Right ventricle myocardium inferior (tissue), 1 donor: ENCODE measurements at regions of chr4 and their contacts with region 1.

Region 1: DNA sequence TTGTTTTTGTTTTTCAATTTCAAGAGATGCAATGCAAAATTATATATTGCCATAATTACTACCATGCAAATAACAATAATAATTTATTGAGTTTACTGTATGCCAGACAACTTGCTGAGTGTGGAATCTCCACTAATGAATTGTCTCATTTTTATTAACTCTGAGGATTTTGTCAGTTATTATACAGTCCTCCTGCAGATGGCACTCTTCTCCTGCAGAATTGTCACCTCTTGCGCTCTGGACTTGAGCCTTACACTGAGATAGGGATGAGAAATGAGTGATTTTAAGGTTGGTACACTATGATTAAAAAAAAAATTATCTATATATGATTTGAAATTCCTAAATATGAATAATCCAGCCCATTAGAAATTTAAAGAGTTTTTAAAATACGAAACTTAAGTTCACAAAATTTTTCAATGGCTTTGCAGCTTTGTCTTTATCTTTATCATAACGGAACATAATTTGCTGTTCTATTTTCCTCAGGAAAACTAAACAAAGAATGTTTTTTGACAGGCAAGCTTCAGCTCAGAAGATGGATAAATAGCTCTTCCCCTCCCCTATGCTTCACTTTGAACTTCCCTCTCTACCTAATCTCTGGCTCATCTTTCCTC is 12.7 kb upstream of the PAQR3 start:
- DNase-seq: no peak
- ATAC-seq: peak; percentile 62

Region 2: DNA sequence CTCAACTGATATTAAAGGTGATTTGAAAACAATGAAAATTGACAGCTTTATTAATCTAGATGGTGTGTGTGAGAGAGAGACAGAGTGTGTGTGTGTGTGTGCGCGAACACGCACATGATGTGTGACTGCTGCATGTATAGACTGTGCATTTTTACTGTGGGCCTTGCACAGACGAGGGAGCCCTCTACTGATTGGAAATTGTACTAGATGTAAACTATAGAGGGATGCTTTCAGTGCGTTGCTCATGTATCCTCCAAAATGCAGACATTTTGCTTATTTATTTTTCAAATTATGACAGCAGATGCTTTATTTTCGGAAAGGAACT is 624.4 kb after region 1 on chr4:
- intact Hi-C with region 1: loop called (anchors 5 kb)
- DNase-seq: no peak
- ATAC-seq: peak; percentile 56

Region 3: GRCh38 chr4:80184053-80184790 is 1232.3 kb after region 1 on chr4:
- intact Hi-C with region 1: loop called (anchors 10 kb)
- DNase-seq: peak; percentile 95
- ATAC-seq: peak; percentile 98

Region 4: DNA sequence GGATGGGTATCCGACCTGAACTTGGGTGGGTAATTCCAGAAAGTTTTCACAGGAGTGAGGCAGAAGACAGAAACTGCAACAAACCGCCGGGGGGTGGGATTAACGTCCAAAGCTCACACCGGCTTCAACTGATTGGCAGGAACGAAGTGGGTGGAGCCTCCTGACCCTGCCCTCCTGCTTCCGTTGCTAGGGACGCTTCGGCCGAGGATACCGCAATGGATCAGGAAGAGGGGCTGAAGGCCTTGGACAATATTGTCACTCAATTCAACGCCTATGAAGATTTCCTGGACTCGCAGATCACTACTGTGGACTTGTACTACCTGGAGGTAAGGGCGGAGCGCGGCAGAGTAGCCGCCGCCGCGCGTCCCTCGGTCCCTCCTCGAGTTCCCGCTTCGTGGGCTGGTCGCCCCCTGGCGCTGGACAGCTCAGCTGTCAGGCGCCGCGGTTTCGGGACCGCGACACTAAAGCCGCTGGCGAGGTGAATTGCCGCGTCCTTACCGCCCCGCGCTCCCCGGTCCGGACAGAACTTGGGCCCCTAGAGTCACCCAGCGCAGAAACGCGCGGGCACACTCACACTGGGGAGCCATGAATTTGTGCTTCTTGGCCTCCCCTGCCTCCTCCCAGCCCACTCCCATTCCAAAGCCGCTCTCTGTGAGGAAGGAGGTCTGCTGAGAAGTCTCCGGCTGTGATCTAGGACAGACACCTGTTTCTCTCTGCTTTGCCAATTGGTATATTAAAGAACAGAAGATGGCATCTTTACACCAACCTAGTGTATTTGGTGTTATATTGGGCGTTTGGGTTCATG is 1383.8 kb after region 1 on chr4 and contains the start of gene CFAP299:
- intact Hi-C with region 1: loop called (anchors 5 kb)
- DNase-seq: peak; percentile 92
- ATAC-seq: peak; percentile 96
- total RNA-seq, gene CFAP299: 0.38 TPM